ENCODE measurements at regions of chr9 and their contacts with region 1.

Region 1: GRCh38 chr9:117782931-117783788 is 79.0 kb downstream of the TLR4 start:
- DNase-seq: peak; percentile 33 to 67 (median 48)
- ATAC-seq: peak; percentile 83
- H3K4me3 ChIP-seq: peak overlapping the region; percentile 51
- H3K4me3 Mint-ChIP-seq: no peak overlapping the region
- H3K27ac ChIP-seq: no peak overlapping the region
- H3K27ac Mint-ChIP-seq: no peak overlapping the region
- H3K4me1 ChIP-seq: peaks cover 9 to 15% of the 10 kb centered on the region in 2 donors
- H3K4me1 Mint-ChIP-seq: peaks cover 0 to 12% (median 3%) of the 10 kb centered on the region in 7 donors
- H3K27me3 ChIP-seq: no peaks in the 10 kb centered on the region
- H3K27me3 Mint-ChIP-seq: peaks cover 0 to 18% (median 3%) of the 10 kb centered on the region in 5 donors

Region 2: GRCh38 chr9:117644133-117644931 is 138.8 kb before region 1 on chr9:
- CTCF ChIA-PET with region 1: no interaction called
- POLR2A ChIA-PET with region 1: no interaction called
- intact Hi-C with region 1: loop called in 1 of 2 experiments (anchors 1 kb)
- DNase-seq: peak; percentile 8 to 58 (median 19)
- ATAC-seq: peak; percentile 85
- H3K4me3 ChIP-seq: no peak overlapping the region
- H3K4me3 Mint-ChIP-seq: peak overlapping the region in 6 of 10 donors; percentile 4 to 65 (median 31)
- H3K27ac ChIP-seq: no peak overlapping the region
- H3K27ac Mint-ChIP-seq: peak overlapping the region in 1 of 9 donors; percentile 19
- H3K4me1 ChIP-seq: no peaks in the 10 kb centered on the region
- H3K4me1 Mint-ChIP-seq: peaks cover 5 to 12% (median 9%) of the 10 kb centered on the region in 7 donors
- H3K27me3 ChIP-seq: peaks cover 0 to 3% of the 10 kb centered on the region in 2 donors
- H3K27me3 Mint-ChIP-seq: peaks cover 28 to 57% (median 39%) of the 10 kb centered on the region in 5 donors

Region 3: DNA sequence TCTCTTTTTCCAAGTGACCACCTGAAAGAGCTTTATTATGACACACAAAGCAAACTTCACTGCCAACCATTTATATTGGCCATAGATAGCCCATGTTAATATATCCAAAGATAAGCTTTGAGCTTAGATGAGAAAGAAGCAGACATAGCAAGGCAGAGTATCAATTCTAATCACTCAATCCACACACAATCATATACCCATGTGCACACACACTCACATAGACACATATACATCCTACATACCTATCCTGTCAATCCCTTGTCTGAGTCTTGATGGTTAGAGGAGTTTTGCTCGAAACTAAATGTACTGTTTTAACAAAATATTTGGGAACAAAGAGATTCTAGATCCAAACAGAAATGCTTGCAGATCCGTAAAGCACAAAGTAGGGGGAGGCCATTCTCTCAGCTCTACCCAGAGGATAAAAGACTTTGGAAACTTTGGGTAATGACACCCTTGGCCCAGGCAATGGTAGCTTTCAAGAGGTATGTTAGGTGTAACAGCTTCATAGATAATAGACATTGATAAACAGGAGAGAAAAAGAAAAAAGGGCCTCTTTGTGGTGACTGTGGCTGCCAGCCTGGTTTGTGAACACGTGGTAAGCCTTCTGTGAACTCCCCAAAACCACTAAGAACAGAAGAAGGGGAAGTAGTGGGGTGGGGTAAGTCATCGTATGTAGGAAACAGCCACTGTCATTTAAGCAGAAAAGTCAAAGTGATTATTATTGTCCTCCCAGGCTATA is 42.6 kb after region 1 on chr9:
- CTCF ChIA-PET with region 1: no interaction called
- POLR2A ChIA-PET with region 1: no interaction called
- intact Hi-C with region 1: loop called (anchors 1 to 2 kb)
- DNase-seq: peak in 8 of 9 donors; percentile 39 to 76 (median 60)
- ATAC-seq: peak; percentile 94
- H3K4me3 ChIP-seq: no peak overlapping the region
- H3K4me3 Mint-ChIP-seq: peak overlapping the region; percentile 22 to 72 (median 48)
- H3K27ac ChIP-seq: no peak overlapping the region
- H3K27ac Mint-ChIP-seq: peak overlapping the region in 4 of 9 donors; percentile 8 to 74 (median 30)
- H3K4me1 ChIP-seq: peaks cover 21 to 26% of the 10 kb centered on the region in 2 donors
- H3K4me1 Mint-ChIP-seq: peaks cover 16 to 43% (median 32%) of the 10 kb centered on the region in 7 donors
- H3K27me3 ChIP-seq: no peaks in the 10 kb centered on the region
- H3K27me3 Mint-ChIP-seq: peaks cover 18 to 63% (median 46%) of the 10 kb centered on the region in 5 donors

Region 4: DNA sequence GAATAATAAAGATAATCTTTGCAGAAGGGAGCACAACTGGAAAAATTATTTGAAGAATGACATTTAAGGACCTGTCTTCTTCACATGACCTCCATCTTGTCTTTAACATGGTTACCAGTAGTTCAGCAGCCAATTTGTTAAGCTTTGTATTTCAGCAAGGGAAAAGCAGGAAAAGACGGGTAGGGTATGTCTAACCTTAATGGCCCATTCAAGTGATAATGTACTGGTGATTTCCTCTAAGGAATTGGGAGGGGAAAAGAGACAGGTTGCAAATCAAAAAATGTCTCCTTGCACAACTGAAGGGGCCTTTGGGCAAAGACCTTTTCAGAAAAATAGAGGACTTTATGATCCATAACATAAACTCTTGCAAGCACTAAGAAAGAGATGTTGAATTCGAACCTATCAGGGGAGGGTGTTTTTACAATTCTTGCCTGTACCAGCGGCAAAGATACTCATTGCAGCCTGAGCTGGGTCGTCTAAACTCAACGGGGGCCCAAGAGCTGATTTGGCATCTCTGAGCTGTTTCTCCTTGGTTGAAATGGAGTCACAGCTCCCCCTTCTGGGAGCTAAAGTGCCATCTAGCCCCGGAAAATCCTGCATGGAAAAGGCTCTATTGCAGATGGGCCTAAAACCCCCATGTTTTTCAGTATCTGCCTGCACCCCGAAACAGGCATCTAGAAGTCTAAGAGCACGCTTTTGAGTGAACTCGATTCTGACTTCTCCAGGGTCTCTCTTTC is 1582.3 kb after region 1 on chr9:
- CTCF ChIA-PET with region 1: no interaction called
- POLR2A ChIA-PET with region 1: no interaction called
- intact Hi-C with region 1: loop called in 1 of 2 experiments (anchors 2 kb)
- DNase-seq: no peak
- ATAC-seq: no peak
- H3K4me3 ChIP-seq: no peak overlapping the region
- H3K4me3 Mint-ChIP-seq: no peak overlapping the region
- H3K27ac ChIP-seq: no peak overlapping the region
- H3K27ac Mint-ChIP-seq: no peak overlapping the region
- H3K4me1 ChIP-seq: no peaks in the 10 kb centered on the region
- H3K4me1 Mint-ChIP-seq: peaks cover 0 to 4% (median 0%) of the 10 kb centered on the region in 7 donors
- H3K27me3 ChIP-seq: no peaks in the 10 kb centered on the region
- H3K27me3 Mint-ChIP-seq: peaks cover 27 to 48% (median 42%) of the 10 kb centered on the region in 5 donors